CD8-positive, alpha-beta T cell (primary cell): ENCODE measurements at regions of chr1 and their contacts with region 1.

Region 1: DNA sequence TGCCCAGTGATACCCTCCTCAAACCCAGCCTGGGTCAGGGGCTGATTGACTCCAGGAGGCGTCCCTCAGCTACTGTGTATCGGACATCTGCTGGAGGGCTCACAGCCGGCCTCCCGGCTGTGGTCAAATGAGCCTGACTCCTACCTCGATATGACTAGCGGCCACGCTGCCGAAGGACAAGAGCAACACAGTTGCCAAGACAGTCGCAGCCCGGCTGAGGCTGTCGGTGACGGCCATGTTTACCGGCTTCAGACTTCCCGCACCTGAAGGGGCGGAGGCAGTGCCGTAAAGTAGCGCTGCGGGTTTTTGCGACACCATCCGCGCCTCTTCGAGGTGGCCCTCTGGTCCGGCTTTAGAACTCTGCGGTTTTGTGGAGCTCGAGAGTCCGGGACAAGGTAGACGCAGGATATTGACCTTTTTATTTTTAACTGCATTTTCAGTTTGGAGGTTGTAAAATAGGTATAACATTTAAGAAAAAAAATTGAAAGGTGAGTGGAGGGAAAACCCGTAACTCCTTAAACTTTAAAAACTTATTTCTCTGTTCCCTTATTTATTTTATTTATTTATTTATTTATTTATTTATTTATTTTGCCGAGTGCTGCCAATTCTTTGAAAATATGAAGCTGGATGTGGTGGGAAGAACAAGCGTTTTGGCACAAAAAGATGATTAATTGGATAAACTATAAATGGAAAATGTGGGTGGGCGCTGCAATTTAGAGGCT is at the start of gene PIGK:
- DNase-seq: peak; percentile 71 to 92 (median 86)
- ATAC-seq: peak; percentile 97
- H3K4me3 ChIP-seq: peak within 1 kb of the TSS; percentile 96 to 97
- H3K4me3 Mint-ChIP-seq: peak within 1 kb of the TSS; percentile 96
- H3K27ac ChIP-seq: peak within 1 kb of the TSS; percentile 80 to 84
- H3K27ac Mint-ChIP-seq: peak within 1 kb of the TSS; percentile 97
- H3K4me1 ChIP-seq: peaks cover 25% of the 10 kb centered on the region
- H3K4me1 Mint-ChIP-seq: peaks cover 58% of the 10 kb centered on the region
- H3K27me3 ChIP-seq: no peaks in the 10 kb centered on the region
- H3K27me3 Mint-ChIP-seq: no peaks in the 10 kb centered on the region
- CTCF ChIP-seq: no peak
- total RNA-seq, gene PIGK: 4.5 to 7.1 TPM

Region 2: DNA sequence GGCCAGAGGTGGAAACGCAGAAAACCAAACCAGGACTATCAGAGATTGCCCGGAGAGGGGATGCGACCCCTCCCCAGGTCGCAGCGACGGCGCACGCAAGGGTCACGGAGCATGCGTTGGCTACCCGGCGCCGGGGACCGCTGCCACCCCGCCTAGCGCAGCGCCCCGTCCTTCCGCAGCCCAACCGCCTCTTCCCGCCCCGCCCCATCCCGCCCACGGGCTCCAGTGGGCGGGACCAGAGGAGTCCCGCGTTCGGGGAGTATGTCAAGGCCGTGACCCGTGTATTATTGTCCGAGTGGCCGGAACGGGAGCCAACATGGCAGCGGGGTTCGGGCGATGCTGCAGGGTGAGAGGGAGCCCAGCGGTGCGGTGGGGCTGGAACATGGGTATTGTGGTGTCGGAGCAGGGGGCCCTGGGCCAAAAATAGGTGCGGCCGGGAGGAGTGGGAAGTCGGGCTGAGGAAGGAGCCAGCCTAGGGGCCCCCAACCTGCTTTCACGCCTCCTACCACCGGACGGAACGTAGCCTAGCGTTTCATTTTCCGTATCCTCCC is 1494.8 kb before region 1 on chr1 and contains the start of gene ACADM:
- CTCF ChIA-PET with region 1: no interaction called
- POLR2A ChIA-PET with region 1: no interaction called
- intact Hi-C with region 1: loop called in 1 of 2 experiments (anchors 10 kb)
- DNase-seq: peak; percentile 58 to 90 (median 79)
- ATAC-seq: peak; percentile 96
- H3K4me3 ChIP-seq: peak within 1 kb of the TSS; percentile 98
- H3K4me3 Mint-ChIP-seq: peak within 1 kb of the TSS; percentile 98
- H3K27ac ChIP-seq: peak within 1 kb of the TSS; percentile 78 to 82
- H3K27ac Mint-ChIP-seq: peak within 1 kb of the TSS; percentile 97
- H3K4me1 ChIP-seq: peaks cover 34% of the 10 kb centered on the region
- H3K4me1 Mint-ChIP-seq: peaks cover 60% of the 10 kb centered on the region
- H3K27me3 ChIP-seq: no peaks in the 10 kb centered on the region
- H3K27me3 Mint-ChIP-seq: no peaks in the 10 kb centered on the region
- CTCF ChIP-seq: no peak
- total RNA-seq, gene ACADM: 5.8 to 6.0 TPM

Region 3: DNA sequence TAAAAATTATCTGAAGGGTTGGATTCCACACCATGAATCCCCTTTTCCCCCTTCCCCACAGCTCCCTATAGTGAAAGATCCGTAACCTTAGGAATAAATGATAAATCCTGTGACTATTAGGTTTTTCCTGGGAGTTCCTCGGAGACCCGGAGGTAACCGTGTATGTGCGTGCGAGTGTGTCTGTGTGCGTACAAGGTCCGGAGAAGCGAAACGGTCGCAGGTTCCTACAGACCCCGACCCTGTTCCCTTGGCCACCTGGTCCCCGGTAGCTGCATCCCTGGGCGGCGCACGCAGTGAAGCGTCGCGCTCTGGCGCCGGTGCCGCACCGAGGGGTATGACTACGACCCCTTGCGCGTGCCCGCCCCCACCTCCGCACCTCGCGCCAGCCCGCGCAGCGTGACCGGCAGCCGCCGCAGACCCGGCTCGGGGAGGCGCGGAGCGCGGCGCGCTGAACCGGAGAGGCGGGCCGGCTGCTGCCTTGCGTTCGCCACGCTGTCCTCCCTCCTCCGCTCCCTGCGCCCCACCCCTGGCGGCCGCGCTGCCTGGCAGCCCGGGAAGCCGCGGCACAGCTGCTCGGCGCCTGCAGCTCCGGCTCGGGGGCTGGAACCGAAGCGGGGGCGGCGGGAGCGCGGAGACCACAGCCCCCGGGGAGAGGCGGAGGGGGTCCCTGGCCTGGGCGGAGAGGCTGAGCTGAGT is 62.3 kb after region 1 on chr1 and contains the start of gene AK5:
- CTCF ChIA-PET with region 1: interaction called, 8 read pairs
- POLR2A ChIA-PET with region 1: no interaction called
- intact Hi-C with region 1: loop called (anchors 1 to 2 kb)
- DNase-seq: peak in 8 of 9 experiments; percentile 13 to 76 (median 46)
- ATAC-seq: peak; percentile 70
- H3K4me3 ChIP-seq: peak within 1 kb of the TSS; percentile 55 to 75
- H3K4me3 Mint-ChIP-seq: peak within 1 kb of the TSS; percentile 79
- H3K27ac ChIP-seq: peak within 1 kb of the TSS in 1 of 2 experiments; percentile 33
- H3K27ac Mint-ChIP-seq: peak within 1 kb of the TSS; percentile 43
- H3K4me1 ChIP-seq: peaks cover 32% of the 10 kb centered on the region
- H3K4me1 Mint-ChIP-seq: peaks cover 41% of the 10 kb centered on the region
- H3K27me3 ChIP-seq: peaks cover 0 to 6% of the 10 kb centered on the region in 2 experiments
- H3K27me3 Mint-ChIP-seq: peaks cover 6% of the 10 kb centered on the region
- CTCF ChIP-seq: no peak
- total RNA-seq, gene AK5: 14.2 to 17.9 TPM

Region 4: GRCh38 chr1:77430966-77431690 is 211.8 kb after region 1 on chr1:
- CTCF ChIA-PET with region 1: no interaction called
- POLR2A ChIA-PET with region 1: no interaction called
- intact Hi-C with region 1: loop called in 1 of 2 experiments (anchors 5 kb)
- DNase-seq: peak in 2 of 9 experiments; percentile 50 to 68
- ATAC-seq: peak; percentile 95
- H3K4me3 ChIP-seq: peak overlapping the region in 1 of 2 experiments; percentile 5
- H3K4me3 Mint-ChIP-seq: no peak overlapping the region
- H3K27ac ChIP-seq: peak overlapping the region; percentile 38 to 82
- H3K27ac Mint-ChIP-seq: no peak overlapping the region
- H3K4me1 ChIP-seq: peaks cover 58% of the 10 kb centered on the region
- H3K4me1 Mint-ChIP-seq: peaks cover 26% of the 10 kb centered on the region
- H3K27me3 ChIP-seq: no peaks in the 10 kb centered on the region
- H3K27me3 Mint-ChIP-seq: no peaks in the 10 kb centered on the region
- CTCF ChIP-seq: no peak

Region 5: GRCh38 chr1:77759071-77760028 is 540.0 kb after region 1 on chr1 and contains the start of gene USP33:
- CTCF ChIA-PET with region 1: no interaction called
- POLR2A ChIA-PET with region 1: no interaction called
- intact Hi-C with region 1: loop called (anchors 1 to 5 kb)
- DNase-seq: peak; percentile 81 to 96 (median 89)
- ATAC-seq: peak; percentile 95
- H3K4me3 ChIP-seq: peak within 1 kb of the TSS; percentile 79 to 98
- H3K4me3 Mint-ChIP-seq: peak within 1 kb of the TSS; percentile 90
- H3K27ac ChIP-seq: peak within 1 kb of the TSS; percentile 70 to 88
- H3K27ac Mint-ChIP-seq: peak within 1 kb of the TSS; percentile 90
- H3K4me1 ChIP-seq: peaks cover 44% of the 10 kb centered on the region
- H3K4me1 Mint-ChIP-seq: peaks cover 45% of the 10 kb centered on the region
- H3K27me3 ChIP-seq: no peaks in the 10 kb centered on the region
- H3K27me3 Mint-ChIP-seq: no peaks in the 10 kb centered on the region
- CTCF ChIP-seq: no peak
- total RNA-seq, gene USP33: 72.1 to 72.2 TPM

Region 6: GRCh38 chr1:78004719-78005447 is 785.6 kb after region 1 on chr1 and contains the start of gene DNAJB4:
- CTCF ChIA-PET with region 1: no interaction called
- POLR2A ChIA-PET with region 1: no interaction called
- intact Hi-C with region 1: loop called in 1 of 2 experiments (anchors 10 kb)
- DNase-seq: peak; percentile 20 to 94 (median 60)
- ATAC-seq: peak; percentile 98
- H3K4me3 ChIP-seq: peak within 1 kb of the TSS; percentile 53 to 71
- H3K4me3 Mint-ChIP-seq: peak within 1 kb of the TSS; percentile 93
- H3K27ac ChIP-seq: peak within 1 kb of the TSS; percentile 96 to 98
- H3K27ac Mint-ChIP-seq: peak within 1 kb of the TSS; percentile 99
- H3K4me1 ChIP-seq: peaks cover 16% of the 10 kb centered on the region
- H3K4me1 Mint-ChIP-seq: peaks cover 49% of the 10 kb centered on the region
- H3K27me3 ChIP-seq: no peaks in the 10 kb centered on the region
- H3K27me3 Mint-ChIP-seq: no peaks in the 10 kb centered on the region
- CTCF ChIP-seq: no peak
- total RNA-seq, gene DNAJB4: 13.3 to 13.4 TPM